Stomach (tissue), 19 donors: ENCODE measurements at regions of chr1 and their contacts with region 1.

Region 1: GRCh38 chr1:156692925-156693847 is 12.2 kb downstream of the CRABP2 start:
- DNase-seq: peak; percentile 56 to 92
- H3K4me3 ChIP-seq: no peak overlapping the region
- H3K27ac ChIP-seq: peak overlapping the region in 3 of 5 donors; percentile 10 to 42 (median 14)
- H3K4me1 ChIP-seq: peaks cover 7 to 45% (median 38%) of the 10 kb centered on the region in 4 donors
- H3K27me3 ChIP-seq: peaks cover 0 to 69% (median 35%) of the 10 kb centered on the region in 3 donors
- CTCF ChIP-seq: no peak
- EP300 ChIP-seq: no peak
- POLR2A ChIP-seq: no peak

Region 2: DNA sequence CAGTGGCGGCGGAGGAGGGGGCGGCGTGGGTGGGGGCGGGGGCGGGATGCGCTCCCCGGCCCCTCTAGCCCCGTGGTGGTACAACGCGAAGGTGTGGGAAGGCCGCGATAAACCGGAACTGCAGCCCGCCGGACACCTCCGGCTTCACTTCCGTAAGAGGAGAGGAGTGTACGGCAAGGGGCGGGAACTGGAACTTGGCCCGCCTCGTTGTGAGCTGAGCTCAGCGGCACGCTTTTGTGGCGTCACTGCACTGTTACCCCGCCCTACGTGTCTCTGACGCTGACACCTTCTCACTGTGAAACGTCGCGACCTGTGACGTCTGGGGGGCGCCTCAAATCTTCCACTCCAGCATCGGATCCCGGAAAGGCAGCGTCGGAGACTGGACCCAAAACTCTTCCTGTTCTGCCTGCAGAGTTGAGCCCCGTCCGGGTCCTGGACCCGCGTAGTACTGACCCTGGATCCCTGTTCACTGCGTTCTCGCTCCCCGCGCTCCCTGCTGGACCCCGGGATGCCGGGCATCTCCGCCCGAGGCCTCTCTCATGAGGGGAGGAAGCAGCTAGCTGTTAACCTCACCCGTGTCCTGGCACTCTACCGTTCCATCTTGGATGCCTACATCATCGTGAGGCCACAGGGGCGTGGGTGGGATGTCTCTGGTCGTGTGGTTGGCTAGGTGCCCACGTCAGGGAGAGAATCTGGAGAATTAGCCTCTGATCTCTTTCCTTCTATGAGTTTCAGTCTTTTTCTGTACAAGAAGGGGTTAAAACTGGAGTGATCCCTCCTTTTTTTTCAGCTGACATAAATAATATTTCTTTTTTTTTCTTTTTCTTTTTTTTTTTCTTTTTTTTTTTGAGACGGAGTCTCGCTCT is 35.6 kb after region 1 on chr1 and contains the start of gene ISG20L2:
- intact Hi-C with region 1: loop called (anchors 5 kb)
- DNase-seq: peak; percentile 98 to 99
- H3K4me3 ChIP-seq: peak within 1 kb of the TSS; percentile 67 to 94 (median 78)
- H3K27ac ChIP-seq: peak within 1 kb of the TSS; percentile 86 to 99 (median 99)
- H3K4me1 ChIP-seq: peaks cover 36 to 64% (median 57%) of the 10 kb centered on the region in 4 donors
- H3K27me3 ChIP-seq: no peaks in the 10 kb centered on the region
- CTCF ChIP-seq: no peak
- EP300 ChIP-seq: no peak
- POLR2A ChIP-seq: peak in 1 of 4 donors; percentile 7
- total RNA-seq, gene ISG20L2: 4.5 to 65.5 (median 24.3) TPM